Dendritic cell treated with granulocyte-macrophage colony-stimulating factor and Interleukin-4, amounts not matched to agents 40 ng/mL and 50 ng/mL, for 4 days (primary cell): ENCODE measurements at regions of chr1 and their contacts with region 1.

Region 1: GRCh38 chr1:156054500-156055280 is at the start of gene LAMTOR2:
- H3K4me3 Mint-ChIP-seq: peak within 1 kb of the TSS; percentile 99
- H3K27ac Mint-ChIP-seq: peak within 1 kb of the TSS; percentile 97
- H3K4me1 Mint-ChIP-seq: peaks cover 53% of the 10 kb centered on the region
- H3K27me3 Mint-ChIP-seq: no peaks in the 10 kb centered on the region

Region 2: GRCh38 chr1:156020292-156021089 is 34.2 kb before region 1 on chr1 and contains the start of gene SSR2:
- intact Hi-C with region 1: loop called (anchors 1 kb)
- H3K4me3 Mint-ChIP-seq: peak within 1 kb of the TSS; percentile 97
- H3K27ac Mint-ChIP-seq: peak within 1 kb of the TSS; percentile 94
- H3K4me1 Mint-ChIP-seq: peaks cover 27% of the 10 kb centered on the region
- H3K27me3 Mint-ChIP-seq: peaks cover 24% of the 10 kb centered on the region

Region 3: GRCh38 chr1:156082309-156083091 is 27.8 kb after region 1 on chr1 and contains the start of gene MEX3A:
- intact Hi-C with region 1: loop called (anchors 2 kb)
- H3K4me3 Mint-ChIP-seq: peak within 1 kb of the TSS; percentile 96
- H3K27ac Mint-ChIP-seq: peak within 1 kb of the TSS; percentile 94
- H3K4me1 Mint-ChIP-seq: peaks cover 46% of the 10 kb centered on the region
- H3K27me3 Mint-ChIP-seq: peaks cover 77% of the 10 kb centered on the region

Region 4: GRCh38 chr1:156090822-156091188 is 36.1 kb after region 1 on chr1:
- intact Hi-C with region 1: loop called (anchors 2 kb)
- H3K4me3 Mint-ChIP-seq: peak overlapping the region; percentile 48
- H3K27ac Mint-ChIP-seq: peak overlapping the region; percentile 78
- H3K4me1 Mint-ChIP-seq: peaks cover 54% of the 10 kb centered on the region
- H3K27me3 Mint-ChIP-seq: peaks cover 61% of the 10 kb centered on the region